ENCODE measurements at regions of chr7 and their contacts with region 1.

Region 1: DNA sequence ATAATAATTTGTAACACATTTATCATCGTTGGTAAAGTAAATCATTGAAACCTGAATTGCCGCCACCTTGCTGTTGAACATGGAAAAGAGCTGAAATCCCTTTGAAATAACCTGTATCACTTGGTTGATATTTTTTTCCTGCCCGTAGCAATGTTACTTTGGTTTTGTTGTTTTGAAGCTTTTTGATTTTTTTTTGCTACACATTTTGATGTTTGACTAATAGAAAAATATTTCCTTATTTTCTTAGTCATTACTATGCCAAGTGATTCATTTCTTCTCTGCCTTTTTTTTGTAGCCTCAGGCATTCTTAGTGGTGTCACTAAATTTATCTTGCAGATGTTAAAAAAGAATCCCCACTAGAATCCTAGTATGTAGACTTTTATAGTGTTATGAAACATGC is 235.1 kb upstream of the MEOX2 start:
- DNase-seq: peak; percentile 59
- H3K4me3 ChIP-seq: peak overlapping the region in 2 of 3 experiments; percentile 28 to 40
- H3K27ac ChIP-seq: peak overlapping the region; percentile 26
- H3K4me1 ChIP-seq: peaks cover 13% of the 10 kb centered on the region
- H3K27me3 ChIP-seq: no peaks in the 10 kb centered on the region
- CTCF ChIP-seq: peak in 1 of 2 donors; percentile 1
- POLR2A ChIP-seq: no peak

Region 2: GRCh38 chr7:15709978-15710377 is 211.6 kb before region 1 on chr7:
- CTCF ChIA-PET with region 1: no interaction called
- POLR2A ChIA-PET with region 1: no interaction called
- dilution Hi-C with region 1: no loop called
- intact Hi-C with region 1: loop called (anchors 2 kb)
- DNase-seq: peak; percentile 60
- H3K4me3 ChIP-seq: no peak overlapping the region
- H3K27ac ChIP-seq: peak overlapping the region; percentile 57
- H3K4me1 ChIP-seq: peaks cover 40% of the 10 kb centered on the region
- H3K27me3 ChIP-seq: no peaks in the 10 kb centered on the region
- CTCF ChIP-seq: no peak
- POLR2A ChIP-seq: no peak

Measured in endothelial cell of umbilical vein (primary cell).